Ascending aorta (tissue), 2 donors: ENCODE measurements at regions of chr16 and their contacts with region 1.

Region 1: DNA sequence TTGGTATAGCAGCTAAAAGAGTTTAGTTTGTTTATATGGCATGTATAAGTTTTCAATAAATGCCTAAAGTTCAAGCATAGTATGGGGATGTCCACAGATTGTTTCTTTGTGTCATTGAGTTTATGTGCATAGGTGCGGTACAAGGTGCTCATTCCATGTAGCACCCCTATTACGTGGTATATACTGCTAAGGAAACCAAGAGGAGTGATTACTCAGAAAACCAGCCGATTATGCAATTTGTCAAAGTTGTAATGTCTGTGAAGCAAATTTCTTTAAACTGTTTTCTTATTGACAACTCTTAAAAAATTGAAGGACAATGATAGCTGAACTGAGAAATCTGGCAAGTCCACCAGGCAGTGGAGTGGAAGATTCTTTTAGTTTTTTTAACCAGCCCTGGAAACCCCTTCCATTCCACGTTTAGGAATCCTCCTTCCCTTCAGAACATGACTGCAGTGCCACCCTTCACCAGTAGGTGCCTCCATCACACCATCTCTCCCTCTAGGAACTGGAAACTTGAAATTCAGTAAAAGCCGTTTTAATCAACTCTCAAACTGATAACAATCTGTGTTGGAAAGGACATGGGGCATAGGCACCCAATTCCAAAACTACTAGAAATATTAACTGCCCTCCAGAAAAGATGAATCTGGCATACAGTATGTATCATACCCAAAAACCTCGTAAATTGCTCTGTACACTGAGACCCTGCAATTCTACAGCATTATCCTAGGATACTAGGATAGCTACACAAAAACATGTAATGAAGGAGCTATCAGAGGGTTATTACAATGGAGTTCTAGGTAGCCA is 43.5 kb downstream of the REXO5 start:
- DNase-seq: peak in 1 of 2 donors; percentile 88
- H3K4me3 ChIP-seq: no peak overlapping the region
- H3K27ac ChIP-seq: peak overlapping the region; percentile 86 to 89
- H3K4me1 ChIP-seq: peaks cover 8 to 48% of the 10 kb centered on the region in 2 donors
- H3K27me3 ChIP-seq: no peaks in the 10 kb centered on the region
- CTCF ChIP-seq: peak; percentile 92 to 99 (median 96)

Region 2: DNA sequence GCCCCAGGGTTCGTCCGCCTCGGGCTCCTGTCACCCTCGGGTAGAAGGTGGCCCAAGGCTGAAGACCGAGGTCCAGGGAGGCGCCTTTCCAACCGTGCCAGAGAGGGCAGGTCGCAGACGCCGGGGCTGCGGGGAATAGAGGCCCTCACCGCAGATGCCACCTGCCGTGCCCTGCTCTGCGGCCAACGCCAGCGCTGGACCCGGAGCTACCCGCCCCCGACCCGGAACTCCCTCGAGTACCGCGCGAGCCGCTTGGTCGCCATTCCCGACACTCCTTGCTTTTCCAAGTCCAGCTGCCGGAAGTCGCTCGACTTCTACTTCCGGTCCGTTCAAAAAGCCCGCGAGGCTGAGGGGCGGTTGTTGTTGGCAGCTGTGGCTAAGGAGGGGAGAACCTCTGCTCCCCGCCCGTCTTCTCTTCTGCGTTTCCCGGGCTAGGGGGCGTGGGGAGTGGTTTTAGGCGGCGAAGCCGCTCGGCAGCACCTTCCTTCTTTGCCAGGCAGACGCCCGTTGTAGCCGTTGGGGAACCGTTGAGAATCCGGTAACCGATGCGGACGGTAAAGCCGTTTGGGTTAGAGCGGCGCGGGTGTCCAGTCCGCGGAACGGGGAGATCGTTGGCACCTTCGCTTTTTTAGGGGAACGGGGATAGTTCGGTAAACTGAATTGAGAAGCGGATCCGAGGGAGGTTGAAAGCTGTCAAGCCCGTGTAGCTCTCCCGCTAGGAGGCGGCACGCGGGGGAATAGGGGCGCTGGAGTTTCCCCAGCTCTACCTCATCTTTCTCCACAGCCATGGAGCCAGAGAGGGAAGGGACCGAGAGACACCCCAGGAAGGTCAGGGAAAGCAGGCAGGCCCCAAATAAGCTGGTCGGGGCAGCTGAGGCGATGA is 43.4 kb before region 1 on chr16 and contains the starts of genes ERI2 and REXO5:
- intact Hi-C with region 1: loop called (anchors 2 kb)
- DNase-seq: peak; percentile 80 to 96
- H3K4me3 ChIP-seq: peak within 1 kb of the TSS; percentile 76 to 92
- H3K27ac ChIP-seq: peak within 1 kb of the TSS; percentile 87 to 92
- H3K4me1 ChIP-seq: peaks cover 0 to 5% of the 10 kb centered on the region in 2 donors
- H3K27me3 ChIP-seq: no peaks in the 10 kb centered on the region
- CTCF ChIP-seq: peak in 1 of 3 experiments; percentile 59
- total RNA-seq, gene ERI2: not detected
- total RNA-seq, gene REXO5: 2.1 TPM

Region 3: GRCh38 chr16:20879175-20880040 is 29.6 kb after region 1 on chr16:
- intact Hi-C with region 1: loop called (anchors 2 kb)
- DNase-seq: no peak
- H3K4me3 ChIP-seq: peak overlapping the region; percentile 7 to 29
- H3K27ac ChIP-seq: peak overlapping the region; percentile 73 to 86
- H3K4me1 ChIP-seq: peaks cover 8 to 54% of the 10 kb centered on the region in 2 donors
- H3K27me3 ChIP-seq: no peaks in the 10 kb centered on the region
- CTCF ChIP-seq: no peak

Region 4: DNA sequence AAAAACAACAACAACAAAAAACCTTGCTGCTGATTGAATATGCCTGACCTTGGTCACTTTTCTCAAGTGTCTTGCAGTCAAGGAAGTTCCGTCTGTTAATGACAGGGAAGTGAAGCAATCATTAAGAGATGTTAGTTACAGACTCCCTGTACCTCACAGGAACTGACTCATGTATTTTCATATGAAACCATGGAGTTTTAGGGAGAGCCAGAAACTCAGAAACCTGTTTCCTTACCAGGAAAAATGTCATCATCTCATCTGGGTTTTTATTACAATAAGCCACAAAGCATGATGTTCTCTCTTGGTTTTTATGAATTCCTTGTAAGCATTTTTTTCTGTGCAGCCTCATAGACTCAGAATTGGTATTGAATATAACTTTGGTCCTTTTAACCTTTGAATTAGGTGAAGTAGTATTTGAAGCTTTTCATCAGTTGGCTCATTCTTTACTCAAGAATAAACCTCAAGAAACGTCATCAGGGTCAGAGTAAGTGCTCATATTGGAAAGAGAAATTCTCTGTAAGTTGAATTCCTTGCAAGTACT is 61.1 kb after region 1 on chr16:
- intact Hi-C with region 1: loop called (anchors 1 kb)
- DNase-seq: no peak
- H3K4me3 ChIP-seq: no peak overlapping the region
- H3K27ac ChIP-seq: peak overlapping the region; percentile 96 to 100
- H3K4me1 ChIP-seq: peaks cover 26 to 68% of the 10 kb centered on the region in 2 donors
- H3K27me3 ChIP-seq: no peaks in the 10 kb centered on the region
- CTCF ChIP-seq: no peak

Region 5: DNA sequence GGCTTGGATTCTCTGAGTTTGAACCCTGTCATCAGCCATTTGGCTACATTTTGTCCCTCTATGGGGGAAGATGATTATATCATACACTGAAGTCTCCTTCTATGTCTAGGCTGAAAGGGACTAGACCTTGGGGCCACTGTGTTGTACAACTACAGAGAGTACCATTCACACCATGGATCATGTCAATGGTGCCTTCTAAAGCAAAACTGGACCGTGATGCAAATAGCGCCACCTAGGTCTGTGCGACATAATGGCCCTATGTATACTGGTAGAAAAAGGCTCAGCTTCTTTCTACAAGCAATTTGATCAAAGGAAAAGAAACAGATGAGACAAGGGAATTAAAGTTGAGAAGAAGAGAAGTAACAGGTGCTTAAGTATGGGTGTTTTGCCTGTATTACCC is 151.5 kb after region 1 on chr16:
- intact Hi-C with region 1: loop called (anchors 5 kb)
- DNase-seq: no peak
- H3K4me3 ChIP-seq: no peak overlapping the region
- H3K27ac ChIP-seq: no peak overlapping the region
- H3K4me1 ChIP-seq: no peaks in the 10 kb centered on the region
- H3K27me3 ChIP-seq: no peaks in the 10 kb centered on the region
- CTCF ChIP-seq: peak in 2 of 3 experiments; percentile 16 to 29

Region 6: DNA sequence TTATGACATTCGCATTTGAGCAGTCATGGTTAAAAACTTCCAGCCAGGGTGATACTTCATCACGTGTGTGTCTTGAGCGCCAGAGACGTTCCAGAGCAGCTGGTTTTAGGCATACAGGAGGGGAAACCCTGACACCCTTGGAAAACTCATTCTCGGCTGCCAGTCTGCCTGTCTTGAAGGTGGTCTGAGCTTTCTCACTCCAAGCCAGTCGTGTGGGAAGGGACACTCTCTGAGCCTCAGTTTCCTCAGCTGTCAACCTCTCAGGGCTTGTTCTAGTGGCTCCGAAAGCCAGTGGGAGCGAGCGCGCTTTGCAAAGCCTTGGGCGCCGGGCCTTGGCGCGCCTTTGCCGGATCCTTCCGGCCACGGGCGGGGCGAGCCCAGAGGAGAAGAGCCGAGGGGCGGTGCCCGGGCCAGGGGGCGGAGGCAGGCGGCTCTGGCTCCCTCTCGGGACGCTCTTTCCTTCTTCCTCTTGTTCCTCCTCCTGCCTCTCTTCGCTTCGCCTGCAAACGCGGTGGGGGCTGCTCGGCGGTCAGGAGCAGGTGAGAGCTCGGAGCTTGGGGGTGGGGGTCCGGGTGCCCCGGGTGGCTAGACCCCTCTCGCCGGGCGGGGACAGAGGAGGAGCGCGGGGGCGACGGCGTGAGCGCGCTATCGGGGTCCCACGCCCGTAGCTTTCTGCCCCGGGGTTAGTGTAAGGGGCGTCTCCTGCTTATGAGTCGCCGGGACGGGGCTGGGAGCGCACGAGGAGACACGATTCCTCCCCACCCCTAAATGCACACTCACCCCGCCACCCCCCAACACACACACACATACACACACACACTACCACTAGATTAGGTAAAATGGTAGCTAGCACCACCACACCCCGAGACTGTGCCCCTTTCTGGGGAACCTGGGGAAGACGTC is 308.7 kb after region 1 on chr16 and contains the start of gene LDAF1:
- intact Hi-C with region 1: loop called (anchors 2 kb)
- DNase-seq: peak; percentile 28 to 91
- H3K4me3 ChIP-seq: peak within 1 kb of the TSS; percentile 85 to 87
- H3K27ac ChIP-seq: peak within 1 kb of the TSS; percentile 87 to 91
- H3K4me1 ChIP-seq: peaks cover 15 to 22% of the 10 kb centered on the region in 2 donors
- H3K27me3 ChIP-seq: no peaks in the 10 kb centered on the region
- CTCF ChIP-seq: no peak
- total RNA-seq, gene LDAF1: 23.5 TPM